Common myeloid progenitor, CD34-positive (primary cell): ENCODE measurements at regions of chr16 and their contacts with region 1.

Region 1: GRCh38 chr16:11639925-11640899 is 28.0 kb upstream of the SNN start:
- DNase-seq: peak; percentile 77 to 87 (median 86)
- H3K4me3 ChIP-seq: no peak overlapping the region
- H3K27ac ChIP-seq: no peak overlapping the region
- H3K4me1 ChIP-seq: peaks cover 0 to 23% (median 13%) of the 10 kb centered on the region in 4 experiments
- H3K27me3 ChIP-seq: no peaks in the 10 kb centered on the region

Region 2: GRCh38 chr16:11535471-11535870 is 104.7 kb before region 1 on chr16:
- CTCF ChIA-PET with region 1: interaction called, 63 read pairs
- POLR2A ChIA-PET with region 1: interaction called, 3 read pairs
- DNase-seq: no peak
- H3K4me3 ChIP-seq: no peak overlapping the region
- H3K27ac ChIP-seq: no peak overlapping the region
- H3K4me1 ChIP-seq: peaks cover 0 to 4% (median under 1%) of the 10 kb centered on the region in 4 experiments
- H3K27me3 ChIP-seq: no peaks in the 10 kb centered on the region

Region 3: DNA sequence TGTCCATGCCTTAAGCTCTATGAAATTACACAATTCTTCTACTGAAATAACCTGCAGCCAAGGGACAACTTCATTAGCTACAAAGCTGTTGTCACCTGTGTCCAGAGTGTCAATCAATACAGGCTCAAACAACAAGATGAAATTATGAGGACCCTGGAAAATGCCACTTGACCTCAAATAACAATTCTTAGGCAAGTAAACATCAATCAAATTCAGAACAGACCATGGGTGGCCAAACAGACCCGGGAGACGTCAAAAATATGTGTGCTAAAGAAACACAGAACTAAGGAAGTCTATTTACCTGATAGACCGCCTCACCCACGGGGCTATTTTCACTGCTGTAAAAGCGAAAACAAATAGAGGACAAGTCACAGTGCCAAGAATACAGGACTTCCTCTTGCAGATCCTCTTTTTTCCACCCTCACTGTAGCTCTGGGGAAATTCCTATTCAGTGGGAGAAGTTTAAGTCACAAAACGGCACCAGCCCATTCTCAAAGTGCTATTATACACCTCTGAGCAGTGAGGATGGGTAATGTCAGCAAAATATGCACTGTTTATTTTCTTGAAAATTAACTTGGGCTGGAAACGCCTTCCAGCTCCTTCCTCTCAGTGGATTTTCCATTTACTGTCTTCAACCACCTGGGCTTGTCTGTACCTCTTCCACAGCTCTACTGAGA is 56.2 kb before region 1 on chr16:
- CTCF ChIA-PET with region 1: interaction called, 15 read pairs
- POLR2A ChIA-PET with region 1: interaction called, 3 read pairs
- DNase-seq: peak in 2 of 3 donors; percentile 63 to 65
- H3K4me3 ChIP-seq: peak overlapping the region in 6 of 7 experiments; percentile 22 to 86 (median 60)
- H3K27ac ChIP-seq: peak overlapping the region in 1 of 2 experiments; percentile 23
- H3K4me1 ChIP-seq: peaks cover 37 to 61% (median 48%) of the 10 kb centered on the region in 4 experiments
- H3K27me3 ChIP-seq: no peaks in the 10 kb centered on the region

Region 4: DNA sequence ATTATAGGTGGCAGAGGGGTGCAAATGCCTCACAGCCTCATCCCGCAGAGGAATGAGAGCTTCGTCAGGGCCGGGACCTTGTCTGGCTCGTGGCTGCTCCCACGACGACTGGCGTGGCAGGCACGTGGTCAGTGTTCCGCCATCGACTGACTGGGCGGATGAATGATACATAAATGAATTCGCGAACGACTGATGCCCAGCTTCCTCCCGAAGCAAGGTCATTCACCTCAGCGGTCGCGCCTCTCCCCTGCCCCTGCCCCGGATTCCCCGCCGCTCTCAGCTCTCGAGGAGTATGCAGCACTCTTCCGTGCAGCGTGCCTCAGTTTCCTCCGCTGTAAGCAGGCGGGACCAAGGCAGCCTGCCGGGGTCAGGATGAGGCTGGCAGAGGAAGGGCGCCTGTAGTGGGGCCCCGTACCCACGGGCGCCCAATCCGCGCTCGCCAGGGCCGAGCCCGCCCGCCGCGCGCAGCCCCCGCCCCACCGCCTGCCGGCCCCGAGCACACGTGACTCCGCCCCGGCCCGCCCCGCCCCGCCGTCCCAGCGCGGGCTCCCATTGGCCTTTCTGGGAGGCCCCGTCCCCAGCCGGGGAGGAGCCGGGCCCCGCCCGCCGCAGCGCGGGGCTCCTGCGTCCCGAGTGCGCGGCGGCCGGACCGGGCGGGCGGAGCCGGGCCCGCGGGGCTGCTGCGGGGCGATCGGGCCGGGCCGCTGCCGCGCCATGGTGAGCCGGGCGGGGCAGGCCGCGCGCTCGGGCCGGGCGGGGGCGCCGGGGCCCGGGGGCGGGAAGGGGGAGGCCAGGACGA is 27.8 kb after region 1 on chr16 and contains the start of gene SNN:
- CTCF ChIA-PET with region 1: no interaction called
- POLR2A ChIA-PET with region 1: no interaction called
- DNase-seq: peak; percentile 81 to 87 (median 81)
- H3K4me3 ChIP-seq: peak within 1 kb of the TSS; percentile 50 to 82 (median 72)
- H3K27ac ChIP-seq: no peak within 1 kb of the TSS
- H3K4me1 ChIP-seq: peaks cover 5 to 64% (median 48%) of the 10 kb centered on the region in 4 experiments
- H3K27me3 ChIP-seq: no peaks in the 10 kb centered on the region